PC-9 (cell line): ENCODE measurements at regions of chr3 and their contacts with region 1.

Region 1: DNA sequence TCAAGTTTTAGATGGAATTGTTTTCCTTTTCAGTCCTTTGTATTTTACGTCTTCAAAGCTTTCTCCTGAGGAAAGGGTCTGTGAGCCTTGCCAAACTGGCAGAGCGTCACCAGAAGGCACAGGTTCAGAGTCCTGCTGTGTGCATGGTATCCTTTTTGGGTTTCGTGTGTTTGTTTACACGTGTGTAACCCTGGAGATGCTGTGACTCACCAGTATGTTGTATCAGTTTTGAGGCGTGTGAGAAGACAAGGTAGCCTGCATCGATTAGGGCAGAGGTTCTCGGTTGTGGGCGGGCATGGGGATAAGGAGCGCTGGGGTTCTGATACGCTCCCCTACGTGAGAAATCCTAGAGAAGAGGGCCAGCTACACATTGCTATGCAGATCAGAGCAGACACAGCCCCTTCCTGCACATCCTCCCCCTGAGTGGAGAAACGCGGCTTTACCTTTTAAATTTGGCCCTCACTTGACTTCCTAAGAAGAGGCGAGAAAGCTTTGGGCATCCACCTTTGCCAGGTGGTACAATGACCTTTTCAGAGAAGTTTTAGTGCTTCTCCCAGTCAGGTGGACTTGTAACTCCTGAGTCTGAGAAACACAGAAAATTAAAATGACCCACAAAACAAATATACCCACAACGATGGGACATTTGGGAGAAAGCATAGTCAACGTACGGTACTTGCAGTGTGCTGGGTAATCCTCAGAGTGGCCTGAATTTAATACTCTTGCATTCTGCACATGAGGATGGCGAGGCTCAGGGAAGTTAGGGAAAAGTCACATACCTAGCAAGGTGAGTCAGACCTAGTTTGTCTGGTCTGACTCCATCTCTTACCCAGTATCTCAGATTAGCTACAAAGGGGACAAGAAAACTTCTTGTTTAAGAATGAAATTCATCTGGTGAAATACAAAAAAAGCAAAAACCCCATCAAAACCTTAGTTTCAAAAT is 38.1 kb downstream of the TRAK1 start:
- DNase-seq: peak; percentile 58 to 92
- H3K4me3 ChIP-seq: peak overlapping the region; percentile 50
- H3K27ac ChIP-seq: peak overlapping the region; percentile 97
- H3K4me1 ChIP-seq: peaks cover 42% of the 10 kb centered on the region
- H3K27me3 ChIP-seq: no peaks in the 10 kb centered on the region
- CTCF ChIP-seq: no peak

Region 2: GRCh38 chr3:41701191-41701698 is 428.0 kb before region 1 on chr3:
- CTCF ChIA-PET with region 1: no interaction called
- POLR2A ChIA-PET with region 1: no interaction called
- intact Hi-C with region 1: no loop called
- DNase-seq: no peak
- H3K4me3 ChIP-seq: no peak overlapping the region
- H3K27ac ChIP-seq: no peak overlapping the region
- H3K4me1 ChIP-seq: no peaks in the 10 kb centered on the region
- H3K27me3 ChIP-seq: no peaks in the 10 kb centered on the region
- CTCF ChIP-seq: no peak

Region 3: DNA sequence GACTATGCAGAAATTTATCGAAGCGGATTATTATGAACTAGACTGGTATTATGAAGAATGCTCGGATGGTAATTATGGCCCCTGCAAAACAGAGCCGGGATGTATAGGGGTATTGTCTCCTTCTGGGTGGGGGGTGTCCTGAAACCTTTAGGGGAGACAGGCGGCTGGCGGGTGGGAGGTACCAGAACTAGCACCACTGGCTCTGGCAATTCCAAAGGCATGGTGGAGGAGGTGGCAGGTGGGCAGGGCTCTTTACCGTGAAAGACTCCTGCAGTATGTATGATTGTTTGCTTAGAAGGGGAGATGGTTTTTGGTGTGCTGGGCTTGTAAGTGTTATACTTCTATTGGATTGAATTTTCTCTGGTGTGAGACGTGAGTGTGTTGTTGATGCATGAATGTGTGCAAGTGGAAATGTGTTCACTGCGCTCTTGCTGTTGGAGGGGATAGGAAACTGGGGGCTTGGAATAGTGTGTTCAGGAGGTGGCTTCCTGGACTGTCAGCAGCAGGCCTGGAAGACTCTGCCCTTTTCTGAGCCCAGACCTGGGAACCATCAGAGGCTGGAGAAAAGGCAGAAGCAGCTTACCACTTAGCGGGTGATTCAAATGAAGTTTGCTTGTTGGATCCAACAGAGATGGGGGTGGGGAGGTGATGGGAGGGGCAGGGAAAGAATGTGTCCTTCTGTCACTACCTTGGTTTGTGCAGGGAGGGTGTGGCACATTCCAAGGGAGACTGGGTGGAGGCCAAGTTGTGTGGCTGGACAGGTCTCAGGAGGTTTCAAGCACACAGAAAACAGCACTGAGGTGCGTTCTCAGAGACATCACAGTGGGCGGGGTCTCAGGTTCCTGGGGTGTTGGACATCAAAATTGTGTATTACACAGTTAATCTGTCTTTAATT is 20.5 kb after region 1 on chr3:
- CTCF ChIA-PET with region 1: no interaction called
- POLR2A ChIA-PET with region 1: no interaction called
- intact Hi-C with region 1: loop called (anchors 2 kb)
- DNase-seq: peak; percentile 89 to 91
- H3K4me3 ChIP-seq: no peak overlapping the region
- H3K27ac ChIP-seq: peak overlapping the region; percentile 82
- H3K4me1 ChIP-seq: peaks cover 29% of the 10 kb centered on the region
- H3K27me3 ChIP-seq: no peaks in the 10 kb centered on the region
- CTCF ChIP-seq: no peak

Region 4: DNA sequence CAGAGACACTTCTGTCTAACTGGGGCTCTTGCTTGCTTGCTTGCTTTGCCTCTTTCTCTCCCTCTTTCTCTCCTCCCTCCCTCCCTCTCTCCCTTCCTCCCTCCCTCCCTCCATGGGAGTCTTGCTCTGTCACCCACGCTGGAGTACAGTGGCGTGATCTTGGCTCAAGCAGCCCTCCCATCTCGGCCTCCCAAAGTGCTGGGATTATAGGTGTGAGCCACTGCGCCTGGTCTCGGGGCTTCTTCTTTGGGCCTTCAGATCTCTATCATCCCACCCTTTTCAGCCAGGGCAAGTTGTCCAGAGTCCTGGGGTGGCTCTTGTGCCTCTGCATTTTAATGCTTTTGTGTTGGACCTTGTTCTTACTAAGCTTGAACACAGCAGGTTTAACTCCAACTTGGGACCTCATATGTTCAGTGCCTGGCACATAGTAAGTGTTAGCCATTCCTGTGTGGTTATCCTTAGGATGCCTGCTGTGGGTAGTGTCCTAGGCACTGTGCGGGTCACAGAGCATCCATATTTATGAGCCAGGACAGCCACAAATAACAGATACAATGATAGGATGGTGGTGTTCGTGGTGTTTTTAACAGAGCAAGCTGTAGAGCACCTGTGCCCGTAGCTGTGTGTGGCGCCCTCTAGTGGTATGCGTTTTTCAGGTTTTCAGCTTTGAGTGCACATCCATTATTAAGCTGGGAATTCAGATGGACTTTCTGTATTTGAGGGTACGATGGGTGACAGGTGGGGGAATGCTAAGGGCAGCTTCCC is 61.6 kb after region 1 on chr3:
- CTCF ChIA-PET with region 1: interaction called, 10 read pairs
- POLR2A ChIA-PET with region 1: interaction called, 3 read pairs
- intact Hi-C with region 1: no loop called
- DNase-seq: peak; percentile 45 to 66
- H3K4me3 ChIP-seq: no peak overlapping the region
- H3K27ac ChIP-seq: no peak overlapping the region
- H3K4me1 ChIP-seq: no peaks in the 10 kb centered on the region
- H3K27me3 ChIP-seq: no peaks in the 10 kb centered on the region
- CTCF ChIP-seq: peak; percentile 88

Region 5: GRCh38 chr3:43512754-43513404 is 1383.6 kb after region 1 on chr3:
- CTCF ChIA-PET with region 1: no interaction called
- POLR2A ChIA-PET with region 1: no interaction called
- intact Hi-C with region 1: no loop called
- DNase-seq: no peak
- H3K4me3 ChIP-seq: no peak overlapping the region
- H3K27ac ChIP-seq: no peak overlapping the region
- H3K4me1 ChIP-seq: no peaks in the 10 kb centered on the region
- H3K27me3 ChIP-seq: no peaks in the 10 kb centered on the region
- CTCF ChIP-seq: no peak